ENCODE measurements at regions of chr10 and their contacts with region 1.

Region 1: GRCh38 chr10:95374597-95375209 is 83.9 kb upstream of the PDLIM1 start:
- DNase-seq: peak; percentile 81

Region 2: GRCh38 chr10:95183271-95184230 is 191.2 kb before region 1 on chr10:
- in situ Hi-C with region 1: loop called (anchors 25 kb)
- DNase-seq: peak; percentile 90